ENCODE measurements at regions of chr20 and their contacts with region 1.

Region 1: GRCh38 chr20:3563548-3564177 is 92.8 kb downstream of the ATRN start:
- DNase-seq: no peak
- ATAC-seq: no peak
- H3K4me3 Mint-ChIP-seq: no peak overlapping the region
- H3K27ac Mint-ChIP-seq: no peak overlapping the region
- H3K4me1 Mint-ChIP-seq: peaks cover 9% of the 10 kb centered on the region
- H3K27me3 Mint-ChIP-seq: no peaks in the 10 kb centered on the region
- CTCF ChIP-seq: peak; percentile 32

Region 2: GRCh38 chr20:3710703-3711483 is 147.2 kb after region 1 on chr20:
- CTCF ChIA-PET with region 1: interaction called, 9 read pairs
- POLR2A ChIA-PET with region 1: no interaction called
- intact Hi-C with region 1: loop called (anchors 1 kb)
- DNase-seq: peak; percentile 65
- ATAC-seq: peak; percentile 42
- H3K4me3 Mint-ChIP-seq: no peak overlapping the region
- H3K27ac Mint-ChIP-seq: no peak overlapping the region
- H3K4me1 Mint-ChIP-seq: no peaks in the 10 kb centered on the region
- H3K27me3 Mint-ChIP-seq: peaks cover 4% of the 10 kb centered on the region
- CTCF ChIP-seq: peak; percentile 61

Region 3: DNA sequence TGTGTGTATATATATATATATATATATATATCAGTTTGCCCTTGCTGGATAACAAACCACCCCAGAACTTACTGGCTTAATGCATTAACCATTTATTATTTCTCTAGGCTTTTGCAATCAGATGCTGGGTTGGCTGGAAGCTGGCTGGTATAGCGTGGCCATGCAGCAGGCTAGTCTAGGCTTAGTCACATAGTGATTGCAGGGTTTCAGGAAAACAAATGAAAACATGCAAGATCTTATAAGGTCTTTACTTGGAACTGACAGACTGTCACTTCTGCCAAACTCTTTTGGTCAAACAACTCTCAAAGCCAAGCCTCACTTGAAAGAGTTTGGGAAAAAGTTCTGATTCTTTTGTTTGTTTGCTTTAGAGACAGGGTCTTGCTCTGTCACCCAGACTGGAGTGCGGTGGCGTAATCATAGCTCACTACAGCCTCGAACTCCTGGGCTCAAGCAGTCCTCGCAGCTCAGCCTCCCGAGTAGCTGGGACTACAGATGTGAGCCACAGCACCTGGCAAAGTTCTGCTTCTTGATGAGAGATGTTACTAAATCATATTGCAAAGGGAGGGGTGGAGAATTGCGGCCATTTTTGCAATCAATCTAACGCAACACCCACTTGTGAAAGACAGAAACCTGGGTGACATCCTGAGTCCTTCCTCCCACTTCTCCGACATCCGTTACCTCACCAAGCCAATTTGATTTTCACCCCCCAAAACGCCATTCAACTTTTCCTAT is 526.3 kb after region 1 on chr20:
- CTCF ChIA-PET with region 1: no interaction called
- POLR2A ChIA-PET with region 1: no interaction called
- intact Hi-C with region 1: loop called (anchors 5 kb)
- DNase-seq: no peak
- ATAC-seq: no peak
- H3K4me3 Mint-ChIP-seq: no peak overlapping the region
- H3K27ac Mint-ChIP-seq: no peak overlapping the region
- H3K4me1 Mint-ChIP-seq: peaks cover 7% of the 10 kb centered on the region
- H3K27me3 Mint-ChIP-seq: peaks cover 9% of the 10 kb centered on the region
- CTCF ChIP-seq: no peak

Region 4: DNA sequence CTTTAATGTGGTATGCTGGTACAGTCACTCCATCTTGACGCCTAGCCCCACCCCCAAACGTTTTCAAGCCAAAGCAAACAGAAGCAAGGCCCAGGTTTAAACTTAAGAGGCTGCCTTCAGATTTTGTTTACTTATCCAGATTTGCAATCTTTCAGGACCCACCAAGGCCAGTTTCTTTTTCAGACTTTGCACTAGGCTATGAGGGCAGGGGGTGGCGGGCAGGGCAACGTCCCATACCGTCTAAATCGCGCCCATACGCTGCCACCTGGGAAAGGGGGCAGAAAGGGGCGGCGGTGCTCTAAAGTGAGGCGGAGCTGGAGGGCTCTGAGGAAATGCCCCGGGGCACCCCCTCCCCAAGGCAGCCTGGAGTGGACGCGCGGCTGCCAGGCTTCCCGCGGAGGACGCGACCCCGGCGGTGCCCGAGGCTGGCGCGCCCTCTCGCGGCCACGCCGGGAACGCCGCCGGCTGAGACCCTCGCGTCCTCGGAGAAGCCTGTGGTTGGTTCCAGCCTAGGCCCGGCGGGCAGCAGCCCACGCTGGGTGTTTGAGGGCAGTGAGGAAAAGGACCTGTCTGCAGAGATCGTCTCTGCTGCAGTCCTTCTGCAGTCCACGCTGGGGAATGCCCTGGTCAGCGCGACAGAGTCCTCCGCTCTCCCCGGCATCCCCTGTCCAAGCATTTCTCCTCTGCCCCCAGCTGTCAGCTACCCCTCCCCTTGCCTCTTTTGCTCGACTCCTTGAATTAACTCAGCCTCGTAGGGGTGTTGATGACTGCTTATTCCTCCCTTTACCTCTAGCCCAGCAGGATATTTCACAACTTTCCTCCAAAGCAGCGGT is 1028.9 kb after region 1 on chr20:
- CTCF ChIA-PET with region 1: no interaction called
- POLR2A ChIA-PET with region 1: no interaction called
- intact Hi-C with region 1: loop called (anchors 5 kb)
- DNase-seq: peak; percentile 67
- ATAC-seq: peak; percentile 80
- H3K4me3 Mint-ChIP-seq: peak overlapping the region; percentile 56
- H3K27ac Mint-ChIP-seq: no peak overlapping the region
- H3K4me1 Mint-ChIP-seq: peaks cover 10% of the 10 kb centered on the region
- H3K27me3 Mint-ChIP-seq: peaks cover 19% of the 10 kb centered on the region
- CTCF ChIP-seq: peak; percentile 94

Measured in activated B cell treated with CpG ODN at 0.5 μM for 24 hours (primary cell).